Aorta (tissue), 5 donors: ENCODE measurements at regions of chr1 and their contacts with region 1.

Region 1: DNA sequence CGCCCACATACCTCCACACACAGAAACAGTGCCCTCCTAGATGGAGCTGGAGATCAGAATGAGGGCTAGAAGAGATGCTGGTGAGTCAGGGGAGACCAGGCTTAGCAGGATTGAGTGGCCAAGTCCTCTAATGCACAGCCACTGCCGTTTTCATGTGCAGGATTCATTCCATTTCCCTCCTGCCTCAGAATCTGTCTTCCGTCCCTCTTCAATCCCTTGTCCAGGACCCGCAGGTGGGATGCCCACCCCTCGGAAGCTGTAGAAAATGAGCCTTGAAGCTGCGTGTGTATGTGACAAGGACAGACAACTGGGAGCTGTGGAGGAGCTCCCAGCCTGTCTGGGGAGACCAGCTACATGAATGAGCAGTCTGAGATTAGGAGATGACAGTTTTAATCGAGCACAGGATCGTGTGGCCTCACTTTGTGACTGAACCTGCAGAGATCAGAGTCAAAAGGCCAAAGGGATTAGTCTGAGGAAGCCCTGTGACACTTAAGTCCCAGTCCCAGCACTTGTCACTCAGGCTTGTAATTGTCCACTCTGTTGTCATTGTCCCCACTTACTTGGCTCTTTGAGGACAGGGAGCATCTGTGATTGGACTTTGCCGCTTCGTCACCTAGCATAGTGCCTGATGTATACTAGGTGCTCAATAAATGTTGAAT is 22.0 kb downstream of the LGR6 start:
- DNase-seq: no peak
- ATAC-seq: no peak
- H3K4me3 ChIP-seq: no peak overlapping the region
- H3K27ac ChIP-seq: peak overlapping the region in 1 of 2 donors; percentile 73
- H3K4me1 ChIP-seq: no peaks in the 10 kb centered on the region
- H3K27me3 ChIP-seq: no peaks in the 10 kb centered on the region

Region 2: DNA sequence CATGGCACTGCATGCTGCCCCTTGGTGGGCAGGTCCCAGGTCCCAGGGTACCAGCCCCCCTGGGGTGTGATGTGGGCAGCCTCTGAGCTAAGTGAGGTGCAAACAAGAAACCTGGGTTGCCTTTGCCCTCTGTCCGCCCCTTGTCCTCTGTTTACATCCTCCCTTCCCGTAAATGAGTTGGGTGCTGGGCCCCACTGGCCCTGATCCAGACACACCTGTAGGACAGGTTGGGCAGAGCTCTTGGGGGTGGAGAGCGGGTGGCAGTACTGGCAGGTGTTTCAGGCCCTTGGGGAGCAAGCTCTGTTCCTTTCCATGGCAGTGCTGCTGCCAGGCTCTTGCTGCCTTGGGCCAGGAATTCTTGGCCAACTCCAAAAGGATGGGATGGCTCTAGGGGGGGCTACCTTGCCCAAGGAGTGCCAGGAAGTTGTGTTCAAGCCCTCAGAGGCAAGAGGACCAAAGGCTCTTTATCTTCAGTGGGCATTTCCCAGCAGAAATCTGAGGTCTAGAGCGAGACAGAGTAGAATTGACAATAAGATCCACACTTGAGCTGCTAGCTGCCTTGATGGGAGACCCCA is 169.3 kb before region 1 on chr1:
- intact Hi-C with region 1: no loop called
- DNase-seq: no peak
- ATAC-seq: peak; percentile 36
- H3K4me3 ChIP-seq: no peak overlapping the region
- H3K27ac ChIP-seq: no peak overlapping the region
- H3K4me1 ChIP-seq: no peaks in the 10 kb centered on the region
- H3K27me3 ChIP-seq: no peaks in the 10 kb centered on the region

Region 3: GRCh38 chr1:202056644-202057461 is 158.7 kb before region 1 on chr1:
- intact Hi-C with region 1: no loop called
- DNase-seq: no peak
- ATAC-seq: peak; percentile 44
- H3K4me3 ChIP-seq: no peak overlapping the region
- H3K27ac ChIP-seq: no peak overlapping the region
- H3K4me1 ChIP-seq: no peaks in the 10 kb centered on the region
- H3K27me3 ChIP-seq: no peaks in the 10 kb centered on the region

Region 4: DNA sequence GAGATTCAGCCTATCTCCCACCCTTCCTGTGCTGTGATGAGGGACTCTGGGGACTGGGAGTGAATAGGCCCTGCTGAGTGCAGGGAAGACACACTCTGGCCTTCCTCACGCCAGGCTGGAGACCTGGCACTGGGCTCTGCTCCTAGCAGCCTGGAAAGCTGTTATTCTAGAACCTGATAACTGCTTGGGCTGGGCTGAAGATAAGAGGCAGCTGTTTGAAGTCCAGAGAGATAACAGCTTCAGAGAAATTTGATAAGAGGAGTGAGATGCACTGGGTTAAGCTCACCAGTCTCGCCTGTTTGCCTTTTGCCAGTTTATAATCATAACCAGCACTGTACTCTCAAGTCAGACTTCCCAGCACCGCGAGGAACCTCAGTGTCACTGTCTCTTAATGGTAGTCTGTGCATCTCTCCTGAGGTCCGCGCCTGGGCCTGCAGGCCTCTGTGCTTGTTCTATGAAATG is 139.5 kb before region 1 on chr1:
- intact Hi-C with region 1: no loop called
- DNase-seq: no peak
- ATAC-seq: no peak
- H3K4me3 ChIP-seq: no peak overlapping the region
- H3K27ac ChIP-seq: no peak overlapping the region
- H3K4me1 ChIP-seq: no peaks in the 10 kb centered on the region
- H3K27me3 ChIP-seq: no peaks in the 10 kb centered on the region

Region 5: DNA sequence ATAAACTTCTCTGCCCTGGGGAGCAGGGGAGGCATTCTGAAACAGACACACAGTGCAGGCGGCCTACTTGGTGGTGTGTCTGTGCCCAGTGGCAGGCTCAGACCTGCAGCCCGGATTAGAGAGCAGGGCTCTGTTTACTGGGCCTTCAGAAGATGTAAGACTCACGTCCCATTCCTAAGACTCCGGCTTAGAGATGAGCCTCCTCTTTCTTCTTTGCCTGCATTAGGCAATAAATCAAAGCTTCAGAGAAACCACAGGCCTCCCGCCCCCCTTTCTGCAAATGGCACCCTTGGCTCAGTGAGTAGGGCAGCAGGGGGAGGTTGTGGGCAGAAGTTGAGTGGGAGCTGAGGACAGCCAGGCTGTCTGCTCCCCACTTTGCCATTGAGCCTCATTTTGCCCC is 13.8 kb after region 1 on chr1:
- intact Hi-C with region 1: loop called in 1 of 2 experiments (anchors 1 kb)
- DNase-seq: no peak
- ATAC-seq: no peak
- H3K4me3 ChIP-seq: no peak overlapping the region
- H3K27ac ChIP-seq: no peak overlapping the region
- H3K4me1 ChIP-seq: no peaks in the 10 kb centered on the region
- H3K27me3 ChIP-seq: no peaks in the 10 kb centered on the region

Region 6: GRCh38 chr1:202270871-202271326 is 55.3 kb after region 1 on chr1:
- intact Hi-C with region 1: no loop called
- DNase-seq: no peak
- ATAC-seq: no peak
- H3K4me3 ChIP-seq: no peak overlapping the region
- H3K27ac ChIP-seq: peak overlapping the region in 1 of 2 donors; percentile 6
- H3K4me1 ChIP-seq: peaks cover 3 to 8% of the 10 kb centered on the region in 2 donors
- H3K27me3 ChIP-seq: no peaks in the 10 kb centered on the region